ENCODE measurements at regions of chr1 and their contacts with region 1.

Region 1: GRCh38 chr1:30506291-30507015 is 216.9 kb downstream of the MATN1 start:
- DNase-seq: no peak
- H3K4me3 ChIP-seq: no peak overlapping the region
- H3K27ac ChIP-seq: no peak overlapping the region
- H3K4me1 ChIP-seq: no peaks in the 10 kb centered on the region
- H3K27me3 ChIP-seq: no peaks in the 10 kb centered on the region
- CTCF ChIP-seq: no peak
- EP300 ChIP-seq: no peak
- POLR2A ChIP-seq: no peak

Region 2: DNA sequence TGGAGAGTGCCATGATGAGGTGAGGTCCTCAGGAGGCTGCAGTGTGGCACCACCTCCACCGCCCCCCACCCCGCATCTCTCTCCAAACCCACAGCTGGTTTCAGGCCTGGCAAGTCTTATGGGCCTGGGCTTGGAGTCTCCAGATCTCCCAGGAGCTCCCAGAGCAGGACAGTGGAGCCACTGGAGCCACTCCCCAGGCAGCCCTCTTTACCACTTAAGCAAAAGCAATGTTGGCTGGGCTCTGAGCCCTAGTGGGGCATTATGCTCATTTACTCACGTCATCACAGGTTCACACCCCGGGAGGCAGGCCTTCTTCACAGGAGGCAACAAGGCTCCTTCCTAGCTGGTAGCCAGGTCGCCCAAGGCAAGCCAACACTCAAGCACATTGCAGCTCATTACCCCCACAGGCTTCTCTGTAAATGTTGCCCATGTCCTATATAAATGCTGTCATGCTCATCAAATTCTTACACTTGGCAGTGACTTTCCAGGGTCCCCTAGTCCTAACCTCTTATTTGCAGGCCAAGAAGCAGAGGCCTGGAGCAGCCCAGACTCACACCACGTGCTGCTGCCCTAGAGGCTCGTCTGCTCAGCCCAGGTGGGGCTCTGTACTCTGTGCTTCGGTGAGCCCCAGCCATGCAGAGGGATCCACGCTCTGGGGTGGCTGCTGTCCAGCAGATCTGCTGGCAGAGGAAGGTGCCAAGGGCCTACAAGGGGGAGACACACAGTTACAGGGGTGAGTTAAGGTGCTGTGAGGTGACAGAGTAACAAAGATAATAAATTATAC is 242.4 kb before region 1 on chr1:
- in situ Hi-C with region 1: no loop called
- intact Hi-C with region 1: loop called (anchors 5 kb)
- DNase-seq: no peak
- H3K4me3 ChIP-seq: no peak overlapping the region
- H3K27ac ChIP-seq: no peak overlapping the region
- H3K4me1 ChIP-seq: no peaks in the 10 kb centered on the region
- H3K27me3 ChIP-seq: peaks cover 13% of the 10 kb centered on the region
- CTCF ChIP-seq: no peak
- EP300 ChIP-seq: no peak
- POLR2A ChIP-seq: no peak

Measured in transverse colon (tissue), 4 donors.